A549 (cell line): ENCODE measurements at regions of chr6 and their contacts with region 1.

Region 1: DNA sequence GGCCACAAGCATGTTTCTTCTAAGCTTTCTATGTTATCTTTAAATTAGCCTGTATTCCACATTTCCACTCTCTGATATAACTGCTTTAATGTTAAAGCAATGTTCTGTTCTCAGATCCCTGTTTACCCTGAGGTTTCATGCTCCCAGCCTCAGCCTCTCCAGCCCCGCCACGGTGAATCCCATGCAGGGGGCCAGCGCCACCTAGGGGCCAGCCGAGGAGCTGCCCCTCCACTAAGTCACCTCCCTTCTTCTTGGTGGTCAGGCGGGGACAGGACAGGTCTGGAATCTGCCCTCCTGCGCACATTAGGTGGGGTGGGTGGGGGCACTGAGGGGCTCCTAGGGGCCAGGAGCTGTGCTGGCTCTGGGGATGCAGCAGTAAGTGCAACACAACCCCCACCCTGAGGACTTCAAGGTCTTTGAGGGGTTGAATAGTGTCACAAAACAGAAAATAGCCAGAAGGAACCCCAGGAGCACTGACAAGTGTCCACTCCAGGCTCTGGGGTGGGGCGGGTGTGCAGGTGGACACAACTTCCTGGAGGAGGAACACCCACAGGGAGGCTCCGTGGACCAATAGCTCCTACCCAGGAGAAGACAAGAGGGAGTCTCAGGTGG is 61.6 kb downstream of the RAB44 start:
- DNase-seq: peak; percentile 69 to 82
- ATAC-seq: peak; percentile 87 to 98
- H3K4me3 ChIP-seq: no peak overlapping the region
- H3K27ac ChIP-seq: peak overlapping the region in 1 of 2 experiments; percentile 59; a peak in 2 of 6 replicates
- H3K4me1 ChIP-seq: peaks cover 9% of the 10 kb centered on the region; the same call in 1 of the 3 replicates
- CTCF ChIP-seq: peak; percentile 88
- EP300 ChIP-seq: no peak
- POLR2A ChIP-seq: no peak
- RAD21 ChIP-seq: peak; percentile 86 to 88

Region 2: DNA sequence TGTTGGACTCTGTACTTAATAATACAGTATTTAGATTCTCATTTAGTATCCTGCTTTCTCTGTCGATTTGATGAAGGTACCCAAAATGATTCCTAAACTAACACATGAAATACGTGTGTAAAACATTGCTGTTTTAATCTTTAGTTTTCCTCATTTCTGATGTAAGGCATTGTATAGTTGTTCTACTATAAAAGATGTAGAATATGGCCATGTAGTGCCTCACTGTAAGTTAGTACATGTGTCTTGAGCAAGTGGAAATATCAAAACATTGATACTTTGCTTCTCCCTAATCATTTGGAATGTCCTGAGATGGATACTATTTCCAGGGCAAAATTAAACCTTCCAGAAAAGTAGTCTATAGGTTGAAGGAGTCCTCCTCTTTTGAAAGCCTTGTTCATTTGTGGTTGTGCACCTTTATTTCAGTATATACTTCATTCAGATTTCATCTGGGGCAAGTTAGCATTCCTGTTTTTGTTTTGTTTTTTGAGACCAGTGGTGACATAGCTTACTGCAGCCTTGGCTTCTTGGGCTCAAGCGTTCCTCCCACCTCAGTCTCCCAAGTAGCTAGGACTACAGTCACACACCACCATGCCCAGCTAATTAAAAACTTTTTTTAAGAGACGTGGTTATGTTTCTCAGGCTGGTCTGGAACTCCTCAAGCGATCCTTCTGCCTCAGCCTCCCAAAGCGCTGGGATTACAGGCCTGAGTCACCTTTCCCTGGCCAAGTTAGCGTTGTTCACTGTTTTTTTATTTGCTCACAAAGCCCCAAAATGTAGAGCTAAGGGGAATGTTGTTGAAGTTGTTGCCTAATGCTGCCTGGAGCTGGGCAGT is 153.5 kb before region 1 on chr6:
- CTCF ChIA-PET with region 1: interaction called, 21 read pairs
- POLR2A ChIA-PET with region 1: no interaction called
- DNase-seq: no peak
- ATAC-seq: peak; percentile 36; a peak in 4 of 6 replicates
- H3K4me3 ChIP-seq: no peak overlapping the region
- H3K27ac ChIP-seq: no peak overlapping the region
- H3K4me1 ChIP-seq: peaks cover 75% of the 10 kb centered on the region; the same call in 2 of the 3 replicates
- CTCF ChIP-seq: no peak
- EP300 ChIP-seq: no peak
- POLR2A ChIP-seq: no peak
- RAD21 ChIP-seq: no peak

Region 3: GRCh38 chr6:36623547-36624459 is 135.5 kb before region 1 on chr6:
- CTCF ChIA-PET with region 1: interaction called, 27 read pairs
- POLR2A ChIA-PET with region 1: no interaction called
- DNase-seq: peak; percentile 62 to 74
- ATAC-seq: peak; percentile 84 to 85
- H3K4me3 ChIP-seq: no peak overlapping the region
- H3K27ac ChIP-seq: peak overlapping the region; percentile 55 to 75; a peak in 5 of 6 replicates
- H3K4me1 ChIP-seq: peaks cover 28% of the 10 kb centered on the region
- CTCF ChIP-seq: peak; percentile 68
- EP300 ChIP-seq: no peak
- POLR2A ChIP-seq: no peak
- RAD21 ChIP-seq: peak; percentile 86 to 87

Region 4: DNA sequence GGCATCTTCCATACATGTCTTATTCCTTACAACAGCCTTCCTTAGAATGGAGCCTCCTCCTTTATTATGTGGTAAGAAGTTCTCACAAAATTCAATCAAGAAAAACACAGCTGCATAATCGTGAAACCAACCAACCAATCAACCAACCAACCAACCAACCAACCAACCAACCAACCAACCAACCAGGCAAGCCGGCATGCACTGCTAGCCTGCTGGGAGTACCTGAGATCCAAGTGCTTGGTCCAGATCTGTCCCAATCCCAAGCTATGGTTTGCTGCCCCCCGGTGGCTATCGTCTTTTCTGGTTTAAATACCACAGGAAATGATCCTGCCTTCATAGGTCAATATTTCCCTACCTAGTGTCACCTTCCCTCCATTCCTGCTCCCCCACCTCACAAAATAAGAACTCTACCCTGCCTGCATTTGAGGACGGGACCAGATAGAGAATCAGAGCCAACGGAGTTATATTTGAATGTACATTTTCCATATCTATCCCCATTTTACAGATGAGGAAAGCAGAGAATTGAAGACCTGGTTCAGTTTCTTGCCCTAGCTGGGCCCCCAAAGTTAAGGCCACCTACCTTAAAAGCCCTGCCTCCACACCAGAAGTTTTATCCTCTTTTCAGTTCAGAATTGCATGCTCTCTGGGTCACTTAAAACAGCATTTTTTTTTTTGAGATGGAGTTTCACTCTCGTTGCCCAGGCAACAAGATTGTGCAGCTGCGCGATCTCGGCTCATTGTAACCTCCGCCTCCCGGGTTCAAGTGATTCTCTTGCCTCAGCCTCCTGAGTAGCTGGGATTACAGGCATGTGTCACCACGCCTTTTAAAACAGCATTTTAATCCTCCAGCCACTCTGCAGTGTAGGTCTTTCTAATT is 34.5 kb before region 1 on chr6:
- CTCF ChIA-PET with region 1: interaction called, 26 read pairs
- POLR2A ChIA-PET with region 1: no interaction called
- DNase-seq: peak; percentile 70 to 72
- ATAC-seq: peak; percentile 78 to 92
- H3K4me3 ChIP-seq: no peak overlapping the region
- H3K27ac ChIP-seq: no peak overlapping the region
- H3K4me1 ChIP-seq: no peaks in the 10 kb centered on the region
- CTCF ChIP-seq: peak; percentile 68
- EP300 ChIP-seq: no peak
- POLR2A ChIP-seq: no peak
- RAD21 ChIP-seq: peak; percentile 76 to 82

Region 5: DNA sequence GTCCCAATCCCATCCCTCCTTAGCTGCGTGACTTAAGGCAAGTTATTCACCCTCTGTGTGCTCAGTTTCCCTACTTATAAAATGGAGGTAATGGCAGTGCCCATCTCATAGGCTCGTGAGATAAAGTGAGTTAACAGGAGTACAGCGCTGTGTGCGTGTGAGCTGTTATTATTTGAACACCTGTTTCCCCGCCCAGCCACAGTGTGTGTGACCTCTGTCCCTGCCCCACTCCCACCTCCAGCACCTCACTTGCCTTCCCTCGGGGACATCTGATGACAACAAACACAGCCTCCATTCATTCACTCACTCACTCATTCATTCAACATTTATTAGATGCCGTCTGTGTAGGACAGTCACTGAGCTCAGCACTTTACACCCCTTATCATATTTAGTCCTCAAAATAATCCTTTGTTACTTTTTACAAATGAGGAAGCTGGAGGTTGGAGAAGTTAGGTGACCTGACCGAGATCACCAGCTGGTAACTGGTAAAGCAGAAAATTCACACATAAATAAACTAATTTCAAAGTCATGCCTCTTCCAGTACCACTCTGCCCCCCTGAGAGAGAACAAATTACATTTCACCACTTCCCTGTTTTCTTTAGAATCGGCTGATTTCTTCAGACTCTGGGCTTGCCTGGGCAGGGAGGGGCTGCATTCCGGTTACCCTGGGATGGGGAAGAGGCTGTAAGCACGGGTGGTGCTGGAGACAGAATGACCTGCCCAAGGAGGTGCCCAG is 21.4 kb after region 1 on chr6:
- CTCF ChIA-PET with region 1: interaction called, 137 read pairs
- POLR2A ChIA-PET with region 1: no interaction called
- DNase-seq: no peak
- ATAC-seq: no peak
- H3K4me3 ChIP-seq: no peak overlapping the region
- H3K27ac ChIP-seq: no peak overlapping the region
- H3K4me1 ChIP-seq: no peaks in the 10 kb centered on the region
- CTCF ChIP-seq: no peak
- EP300 ChIP-seq: no peak
- POLR2A ChIP-seq: no peak
- RAD21 ChIP-seq: no peak